ENCODE measurements at regions of chr2 and their contacts with region 1.

Region 1: DNA sequence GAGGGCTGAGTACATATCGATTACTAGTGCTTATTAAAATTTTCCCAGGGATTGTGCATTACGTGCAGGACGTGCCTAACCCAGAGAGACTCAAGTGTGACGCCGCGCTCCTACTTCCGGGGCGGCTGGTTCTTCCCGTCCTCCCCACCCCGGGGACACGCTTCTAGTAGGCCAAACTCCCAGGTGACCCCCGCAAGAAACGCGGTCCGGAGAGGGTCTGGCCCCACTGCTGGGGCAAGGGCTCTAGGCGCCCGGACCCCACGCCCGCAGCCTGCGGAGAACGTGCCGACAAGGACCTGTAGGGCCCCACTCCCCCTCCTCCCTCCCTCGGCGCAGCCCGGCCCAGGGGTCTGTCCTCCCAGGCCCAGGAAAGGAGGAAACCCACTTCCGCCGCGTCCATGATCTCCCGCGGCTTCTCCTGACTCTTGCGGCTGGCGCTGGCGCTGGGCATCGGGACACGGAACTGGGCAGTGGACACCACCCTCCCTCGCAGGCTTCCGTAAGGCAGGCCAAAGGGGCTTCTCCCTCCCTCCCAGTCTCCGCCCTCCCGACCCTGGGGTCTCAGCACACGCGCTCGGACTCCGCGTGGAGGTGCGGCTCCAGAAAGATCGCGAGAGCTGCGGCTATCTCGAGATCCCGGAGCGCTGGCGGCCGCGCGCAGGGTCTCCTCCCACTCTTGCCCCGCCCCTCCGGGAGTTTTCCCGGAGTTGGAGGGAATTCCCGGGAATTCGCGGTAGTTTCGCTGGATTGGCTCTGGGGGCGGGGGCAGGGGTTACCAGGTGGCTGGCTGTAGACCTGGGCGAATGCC is at the start of gene DARS1:
- DNase-seq: peak; percentile 88
- H3K4me3 Mint-ChIP-seq: peak within 1 kb of the TSS; percentile 87
- H3K27ac Mint-ChIP-seq: peak within 1 kb of the TSS; percentile 87
- H3K4me1 Mint-ChIP-seq: peaks cover 47% of the 10 kb centered on the region
- H3K27me3 Mint-ChIP-seq: no peaks in the 10 kb centered on the region
- total RNA-seq, gene DARS1: 147 to 151 TPM

Region 2: DNA sequence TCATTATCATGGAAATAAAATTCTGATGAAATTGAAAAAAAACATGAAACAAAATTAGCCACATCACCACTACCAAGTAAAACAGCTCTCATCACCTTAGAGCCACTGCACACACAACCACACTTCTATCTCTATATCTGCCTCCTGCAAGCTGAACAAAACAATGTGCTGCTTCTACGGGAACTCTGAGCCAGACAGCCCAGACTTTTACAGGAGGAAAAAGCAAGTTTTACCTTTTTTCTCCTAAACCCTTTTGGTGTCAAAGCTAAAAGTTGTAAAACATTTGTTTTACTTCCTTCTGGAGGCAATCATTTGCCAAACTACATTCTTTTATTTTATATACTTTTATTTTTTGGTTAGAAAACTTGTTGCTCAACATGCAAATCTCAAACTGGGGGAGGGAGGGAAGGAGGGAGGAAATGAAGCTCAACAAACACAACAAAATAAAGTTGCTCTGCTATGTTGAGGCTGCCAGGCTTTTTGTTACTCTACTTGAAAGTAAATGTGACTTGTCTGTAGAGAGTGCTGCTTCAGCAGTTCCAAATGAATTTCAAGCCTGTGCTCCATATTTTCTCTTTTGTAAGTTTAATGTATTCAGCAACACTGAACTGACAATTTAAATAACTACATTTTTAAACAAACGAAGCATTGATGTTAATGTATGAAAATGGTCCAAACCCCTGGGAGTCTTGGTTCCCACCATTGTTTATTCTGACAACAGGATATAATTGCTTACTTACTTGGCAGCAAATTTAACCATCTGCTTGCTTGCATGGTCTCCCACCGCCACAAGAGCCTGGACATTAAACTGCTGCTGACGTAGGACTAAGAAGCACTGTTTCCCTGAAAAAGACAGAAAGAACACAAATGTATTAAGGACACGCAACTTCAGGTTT is 24.3 kb before region 1 on chr2:
- CTCF ChIA-PET with region 1: interaction called, 4 read pairs
- POLR2A ChIA-PET with region 1: interaction called, 52 read pairs
- DNase-seq: peak; percentile 33
- H3K4me3 Mint-ChIP-seq: peak overlapping the region; percentile 53
- H3K27ac Mint-ChIP-seq: peak overlapping the region; percentile 92
- H3K4me1 Mint-ChIP-seq: peaks cover 58% of the 10 kb centered on the region
- H3K27me3 Mint-ChIP-seq: no peaks in the 10 kb centered on the region

Region 3: DNA sequence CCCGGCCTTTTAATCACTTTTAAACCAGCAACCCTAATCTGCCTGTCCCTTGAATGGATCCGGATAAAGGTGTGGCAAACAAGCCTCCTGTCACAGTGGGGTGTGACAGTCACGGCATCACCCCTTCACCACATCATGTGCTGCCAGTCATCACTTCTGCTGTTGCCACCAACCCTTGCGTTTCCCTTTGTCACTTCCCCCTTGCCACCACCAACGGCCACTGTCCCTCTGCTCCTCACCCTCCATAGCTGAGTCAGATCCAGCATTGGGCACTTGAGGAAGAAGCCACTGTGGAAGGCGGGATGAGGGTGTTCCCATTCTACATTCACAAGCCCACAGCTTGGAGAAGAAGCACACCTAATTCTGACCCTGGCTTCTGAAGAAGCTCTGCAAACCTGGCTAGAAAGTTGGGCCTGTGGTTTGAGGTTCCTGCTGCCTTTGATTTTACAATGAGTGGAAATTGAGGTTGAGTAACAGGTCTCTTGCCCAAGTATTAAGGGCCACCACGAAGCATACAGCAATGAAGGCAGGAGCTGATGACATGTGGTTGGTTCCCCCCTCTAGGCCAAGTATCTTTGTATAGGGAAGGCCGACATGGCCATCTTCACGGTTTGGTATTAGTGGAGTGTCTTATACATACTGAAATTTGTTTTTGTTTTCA is 23.1 kb after region 1 on chr2:
- CTCF ChIA-PET with region 1: interaction called, 5 read pairs
- POLR2A ChIA-PET with region 1: interaction called, 91 read pairs
- DNase-seq: peak; percentile 90
- H3K4me3 Mint-ChIP-seq: peak overlapping the region; percentile 50
- H3K27ac Mint-ChIP-seq: peak overlapping the region; percentile 94
- H3K4me1 Mint-ChIP-seq: peaks cover 68% of the 10 kb centered on the region
- H3K27me3 Mint-ChIP-seq: no peaks in the 10 kb centered on the region

Region 4: GRCh38 chr2:136025057-136025973 is 40.1 kb after region 1 on chr2:
- CTCF ChIA-PET with region 1: no interaction called
- POLR2A ChIA-PET with region 1: no interaction called
- DNase-seq: peak; percentile 33
- H3K4me3 Mint-ChIP-seq: no peak overlapping the region
- H3K27ac Mint-ChIP-seq: no peak overlapping the region
- H3K4me1 Mint-ChIP-seq: peaks cover 3% of the 10 kb centered on the region
- H3K27me3 Mint-ChIP-seq: no peaks in the 10 kb centered on the region

Region 5: DNA sequence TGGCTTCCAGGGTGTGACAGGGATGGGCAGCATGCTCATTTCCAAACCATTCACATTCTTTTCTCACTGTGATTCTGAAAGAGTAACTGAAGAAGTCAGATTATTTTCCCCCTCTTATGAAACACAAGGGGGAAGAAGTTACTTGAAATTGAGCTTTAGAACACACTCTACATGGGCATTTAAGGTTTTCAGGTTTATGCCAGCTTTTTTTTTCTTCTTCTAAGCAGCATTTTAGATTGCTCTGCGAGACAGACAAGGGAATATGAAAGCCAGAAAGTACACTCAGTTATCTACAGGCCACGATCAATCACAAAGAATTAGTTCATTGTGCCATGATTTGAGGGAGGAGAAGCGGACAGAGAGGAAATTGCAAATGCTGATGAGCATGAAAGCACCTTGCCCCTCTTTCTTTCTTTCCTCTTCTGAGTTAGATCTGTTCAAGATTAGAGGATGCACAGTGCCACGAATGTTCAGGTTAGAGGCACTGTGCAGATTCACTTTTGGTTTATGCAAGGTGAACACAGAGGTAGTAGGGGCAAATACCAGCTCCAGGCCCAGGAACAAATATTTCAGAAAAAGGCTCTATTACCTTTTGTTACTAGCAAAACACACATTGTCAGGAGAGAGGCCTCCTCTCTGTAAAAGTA is 83.5 kb after region 1 on chr2:
- CTCF ChIA-PET with region 1: no interaction called
- POLR2A ChIA-PET with region 1: interaction called, 11 read pairs
- DNase-seq: no peak
- H3K4me3 Mint-ChIP-seq: peak overlapping the region; percentile 26
- H3K27ac Mint-ChIP-seq: peak overlapping the region; percentile 68
- H3K4me1 Mint-ChIP-seq: peaks cover 43% of the 10 kb centered on the region
- H3K27me3 Mint-ChIP-seq: no peaks in the 10 kb centered on the region

Region 6: DNA sequence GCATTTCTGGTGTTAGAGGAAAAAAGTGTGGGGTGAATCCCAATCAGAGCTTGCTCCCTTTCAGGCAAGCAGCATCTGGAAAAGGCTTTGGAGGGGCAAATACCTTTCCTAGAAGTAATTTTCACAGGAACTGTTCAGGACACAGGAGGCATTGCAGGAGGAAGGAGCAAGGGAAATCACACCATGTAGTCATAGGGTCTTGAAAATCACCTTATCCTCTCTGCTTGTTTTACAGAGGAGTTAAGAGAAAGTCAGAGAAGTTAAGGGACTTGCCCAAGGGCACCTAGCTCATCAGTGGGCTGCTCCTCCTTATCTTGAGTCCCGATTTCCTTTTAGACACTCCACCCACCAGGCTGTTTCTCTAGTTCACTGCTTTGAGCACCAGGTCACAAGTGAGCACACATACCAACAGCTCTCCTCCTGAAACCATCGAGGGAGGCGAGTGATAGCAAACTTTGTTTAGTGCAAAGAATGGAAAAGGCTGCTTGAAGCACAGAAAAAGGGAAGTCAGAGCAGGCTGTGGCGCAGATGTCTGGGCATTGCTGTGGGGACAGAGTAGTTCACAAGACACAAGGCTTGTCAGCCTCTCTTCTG is 221.9 kb after region 1 on chr2:
- CTCF ChIA-PET with region 1: no interaction called
- POLR2A ChIA-PET with region 1: no interaction called
- DNase-seq: no peak
- H3K4me3 Mint-ChIP-seq: no peak overlapping the region
- H3K27ac Mint-ChIP-seq: no peak overlapping the region
- H3K4me1 Mint-ChIP-seq: peaks cover 10% of the 10 kb centered on the region
- H3K27me3 Mint-ChIP-seq: no peaks in the 10 kb centered on the region

Region 7: GRCh38 chr2:136384531-136385303 is 399.5 kb after region 1 on chr2:
- CTCF ChIA-PET with region 1: interaction called, 3 read pairs
- POLR2A ChIA-PET with region 1: interaction called, 29 read pairs
- DNase-seq: peak; percentile 64
- H3K4me3 Mint-ChIP-seq: peak overlapping the region; percentile 11
- H3K27ac Mint-ChIP-seq: peak overlapping the region; percentile 91
- H3K4me1 Mint-ChIP-seq: peaks cover 45% of the 10 kb centered on the region
- H3K27me3 Mint-ChIP-seq: no peaks in the 10 kb centered on the region

Region 8: GRCh38 chr2:136423516-136423996 is 438.3 kb after region 1 on chr2:
- CTCF ChIA-PET with region 1: no interaction called
- POLR2A ChIA-PET with region 1: no interaction called
- DNase-seq: peak; percentile 83
- H3K4me3 Mint-ChIP-seq: peak overlapping the region; percentile 67
- H3K27ac Mint-ChIP-seq: no peak overlapping the region
- H3K4me1 Mint-ChIP-seq: peaks cover 22% of the 10 kb centered on the region
- H3K27me3 Mint-ChIP-seq: peaks cover 59% of the 10 kb centered on the region

Region 9: GRCh38 chr2:136495636-136496035 is 510.4 kb after region 1 on chr2:
- CTCF ChIA-PET with region 1: no interaction called
- POLR2A ChIA-PET with region 1: no interaction called
- DNase-seq: no peak
- H3K4me3 Mint-ChIP-seq: no peak overlapping the region
- H3K27ac Mint-ChIP-seq: no peak overlapping the region
- H3K4me1 Mint-ChIP-seq: no peaks in the 10 kb centered on the region
- H3K27me3 Mint-ChIP-seq: peaks cover 8% of the 10 kb centered on the region